Activated naive CD4-positive, alpha-beta T cell treated with anti-CD3 and anti-CD28 coated beads for 36 hours (primary cell): ENCODE measurements at regions of chr6 and their contacts with region 1.

Region 1: DNA sequence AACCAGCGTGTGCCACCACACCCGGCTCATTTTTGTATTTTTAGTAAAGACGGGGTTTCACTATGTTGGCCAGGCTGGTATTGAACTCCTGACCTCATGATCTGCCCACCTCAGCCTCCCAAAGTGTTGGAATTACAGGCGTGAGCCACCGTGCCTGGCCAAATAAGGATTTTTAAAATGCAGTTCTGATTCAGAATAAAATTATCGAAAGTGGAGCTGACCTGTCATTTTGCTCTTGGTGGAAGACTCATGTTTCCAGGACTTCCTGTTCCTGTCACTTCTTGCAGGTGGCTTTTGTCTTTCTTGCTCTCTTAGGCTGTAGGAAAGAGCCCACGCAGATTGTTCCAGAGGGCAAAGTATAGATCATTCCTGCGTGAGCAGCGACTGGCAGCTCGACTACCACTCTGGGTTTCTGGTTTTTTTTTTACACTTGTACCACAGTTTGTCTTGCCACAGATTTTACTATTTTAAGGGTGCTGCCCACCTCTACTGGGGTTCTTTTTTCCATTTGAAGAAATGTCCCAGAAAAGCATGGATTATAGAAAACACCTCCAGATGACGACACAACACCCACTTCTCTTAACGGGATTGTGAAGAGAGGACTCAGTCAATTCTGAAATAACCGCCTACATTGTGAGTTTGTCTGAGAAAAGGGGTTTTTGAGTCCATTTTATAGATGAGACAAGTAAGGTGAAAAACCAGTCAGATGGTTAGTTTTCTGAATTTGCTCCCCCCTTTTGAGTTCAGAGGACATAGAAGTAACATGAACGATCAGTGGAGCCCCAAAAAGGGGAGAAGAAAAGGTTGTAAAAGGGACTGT is 7.5 kb downstream of the JARID2 start:
- DNase-seq: peak; percentile 45
- H3K4me3 Mint-ChIP-seq: peak overlapping the region; percentile 62
- H3K27ac Mint-ChIP-seq: peak overlapping the region; percentile 89
- H3K4me1 Mint-ChIP-seq: peaks cover 92% of the 10 kb centered on the region
- H3K27me3 Mint-ChIP-seq: no peaks in the 10 kb centered on the region

Region 2: DNA sequence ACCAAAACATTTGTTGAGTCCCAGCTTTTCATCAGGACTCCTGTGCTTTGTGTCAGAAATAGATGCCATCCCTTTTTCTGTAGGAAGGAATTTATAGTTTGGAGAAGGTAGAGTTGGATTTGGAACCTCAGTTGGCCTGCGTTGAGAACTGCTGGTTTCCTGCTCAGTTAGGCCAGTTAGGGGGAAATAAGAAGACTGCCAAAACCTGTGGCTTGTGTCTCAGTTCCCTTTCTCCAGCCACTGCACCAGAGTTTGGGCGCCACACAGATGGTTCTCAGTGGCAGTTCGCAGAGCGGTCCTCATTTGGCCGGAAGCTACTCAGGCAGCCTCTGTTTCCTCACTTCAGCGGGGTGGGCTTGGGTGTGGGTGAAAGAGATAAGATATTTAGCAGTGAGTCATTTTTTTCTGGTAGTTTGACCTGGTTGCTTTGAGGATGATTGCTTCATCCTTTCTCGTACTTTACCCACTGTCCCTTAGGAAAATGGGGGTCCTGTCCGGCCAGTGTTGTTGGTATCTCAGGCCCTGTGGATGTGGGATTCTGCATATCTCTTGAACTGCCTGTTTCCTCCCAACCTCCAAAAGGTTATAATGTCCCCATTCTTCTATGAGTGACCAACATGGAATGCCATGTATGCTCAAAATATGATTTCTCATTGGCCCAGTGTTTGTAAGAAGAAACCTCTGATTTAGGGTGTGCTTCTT is 46.2 kb after region 1 on chr6:
- CTCF ChIA-PET with region 1: interaction called, 3 read pairs
- intact Hi-C with region 1: loop called (anchors 1 kb)
- DNase-seq: peak; percentile 36
- H3K4me3 Mint-ChIP-seq: no peak overlapping the region
- H3K27ac Mint-ChIP-seq: no peak overlapping the region
- H3K4me1 Mint-ChIP-seq: peaks cover 82% of the 10 kb centered on the region
- H3K27me3 Mint-ChIP-seq: no peaks in the 10 kb centered on the region

Region 3: GRCh38 chr6:15317934-15318902 is 64.8 kb after region 1 on chr6:
- CTCF ChIA-PET with region 1: interaction called, 3 read pairs
- intact Hi-C with region 1: loop called (anchors 1 kb)
- DNase-seq: peak; percentile 72
- H3K4me3 Mint-ChIP-seq: peak overlapping the region; percentile 57
- H3K27ac Mint-ChIP-seq: peak overlapping the region; percentile 84
- H3K4me1 Mint-ChIP-seq: peaks cover 93% of the 10 kb centered on the region
- H3K27me3 Mint-ChIP-seq: no peaks in the 10 kb centered on the region

Region 4: DNA sequence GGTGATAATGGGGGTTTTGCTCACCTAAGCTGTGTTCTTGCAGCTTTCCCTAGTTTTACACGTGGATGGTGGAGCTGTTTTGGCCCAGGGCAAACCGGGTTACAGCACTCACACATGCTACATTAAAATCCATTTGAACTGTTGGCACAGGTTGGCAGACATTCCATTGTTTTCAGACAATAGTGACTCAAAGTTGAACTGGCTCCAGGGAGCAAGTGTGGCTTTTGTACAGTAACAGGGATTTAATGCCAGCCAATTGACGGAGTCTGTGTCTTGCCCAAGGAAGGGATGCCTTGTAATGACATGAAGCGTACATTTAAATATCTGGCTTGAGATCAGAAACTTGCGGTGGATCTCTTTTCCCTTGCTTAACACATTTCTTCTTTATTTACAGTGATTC is 226.3 kb after region 1 on chr6:
- CTCF ChIA-PET with region 1: no interaction called
- intact Hi-C with region 1: loop called (anchors 2 kb)
- DNase-seq: no peak
- H3K4me3 Mint-ChIP-seq: no peak overlapping the region
- H3K27ac Mint-ChIP-seq: no peak overlapping the region
- H3K4me1 Mint-ChIP-seq: peaks cover 59% of the 10 kb centered on the region
- H3K27me3 Mint-ChIP-seq: no peaks in the 10 kb centered on the region